Tibial artery (tissue), 4 donors: ENCODE measurements at regions of chr2 and their contacts with region 1.

Region 1: DNA sequence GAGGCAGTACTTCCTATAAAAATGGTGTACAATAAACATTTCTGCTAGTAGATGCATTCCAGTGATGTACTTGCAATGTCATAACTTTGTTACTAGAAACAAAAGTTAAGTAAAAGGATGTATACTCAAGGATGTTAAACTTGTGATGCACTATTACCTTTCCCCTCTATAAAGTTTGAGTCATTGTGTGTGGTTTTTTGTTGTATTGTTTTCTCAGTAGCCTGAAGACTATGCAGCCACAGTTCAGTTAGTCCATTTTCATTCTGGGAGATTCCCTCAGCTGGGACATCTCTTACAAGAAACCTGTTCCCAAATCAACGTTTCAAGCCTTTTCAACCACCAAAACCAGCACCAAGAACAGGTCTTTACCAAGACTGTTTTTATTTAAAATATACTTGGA is 5.6 kb downstream of the ATP5MC3 start:
- DNase-seq: no peak
- H3K4me3 ChIP-seq: no peak overlapping the region
- H3K27ac ChIP-seq: no peak overlapping the region
- H3K4me1 ChIP-seq: peaks cover 0 to 7% (median 4%) of the 10 kb centered on the region in 4 donors
- H3K27me3 ChIP-seq: no peaks in the 10 kb centered on the region
- CTCF ChIP-seq: no peak

Region 2: GRCh38 chr2:174878537-174879147 is 297.3 kb before region 1 on chr2:
- intact Hi-C with region 1: no loop called
- DNase-seq: no peak
- H3K4me3 ChIP-seq: peak overlapping the region; percentile 29 to 42
- H3K27ac ChIP-seq: no peak overlapping the region
- H3K4me1 ChIP-seq: peaks cover 0 to 18% (median 1%) of the 10 kb centered on the region in 4 donors
- H3K27me3 ChIP-seq: no peaks in the 10 kb centered on the region
- CTCF ChIP-seq: no peak

Region 3: DNA sequence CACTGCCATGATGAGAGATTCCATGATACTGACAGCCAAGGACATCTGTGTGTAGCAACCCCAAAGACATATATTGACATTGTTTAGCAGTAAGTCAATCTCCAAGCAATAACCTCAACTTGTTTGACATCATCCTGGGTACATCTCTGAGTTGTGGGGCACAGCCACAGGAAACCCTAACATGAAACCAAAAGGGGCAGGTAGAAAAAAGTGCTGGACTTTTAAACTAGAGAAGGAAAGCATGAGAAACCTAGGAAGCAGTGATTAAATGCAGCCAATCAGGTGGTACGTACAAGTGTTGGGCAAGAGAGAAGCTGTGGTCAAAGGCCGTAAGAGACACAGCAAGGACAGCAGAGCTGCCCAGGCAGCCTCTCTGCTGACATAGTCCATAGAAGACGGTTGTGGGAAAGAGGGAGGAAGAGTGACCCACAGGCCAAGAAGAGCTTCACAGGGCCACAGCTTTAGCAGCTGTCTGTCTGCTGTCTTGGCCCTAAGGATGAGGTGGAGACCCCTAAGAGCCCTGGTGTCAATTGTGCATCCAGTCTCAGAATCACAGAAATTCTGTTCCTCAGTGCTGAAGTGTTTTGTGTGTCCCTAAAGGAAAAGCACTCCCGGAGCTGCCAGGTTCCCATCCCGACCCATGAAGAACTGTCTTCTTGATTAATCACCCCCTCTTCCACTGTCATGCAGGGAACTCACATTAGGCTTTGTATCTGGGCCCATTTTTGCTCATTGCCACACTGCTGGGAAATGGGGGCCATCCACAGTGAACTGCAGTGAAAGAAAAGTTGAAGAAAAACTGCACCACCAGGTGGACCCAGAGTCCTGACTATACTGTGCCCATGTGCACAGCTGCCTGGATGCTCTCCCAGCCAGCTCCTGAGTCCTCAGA is 145.3 kb before region 1 on chr2:
- intact Hi-C with region 1: loop called (anchors 10 kb)
- DNase-seq: no peak
- H3K4me3 ChIP-seq: no peak overlapping the region
- H3K27ac ChIP-seq: peak overlapping the region in 1 of 2 donors; percentile 96
- H3K4me1 ChIP-seq: peaks cover 0 to 40% (median 5%) of the 10 kb centered on the region in 4 donors
- H3K27me3 ChIP-seq: no peaks in the 10 kb centered on the region
- CTCF ChIP-seq: peak in 1 of 2 experiments; percentile 22